ENCODE measurements at regions of chr7 and their contacts with region 1.

Region 1: GRCh38 chr7:98133181-98133580 is 26.5 kb downstream of the LMTK2 start:
- DNase-seq: peak in 6 of 9 donors; percentile 9 to 20 (median 16)
- ATAC-seq: peak; percentile 66
- H3K4me3 ChIP-seq: peak overlapping the region; percentile 11
- H3K4me3 Mint-ChIP-seq: peak overlapping the region; percentile 43 to 80 (median 60)
- H3K27ac ChIP-seq: no peak overlapping the region
- H3K27ac Mint-ChIP-seq: peak overlapping the region in 4 of 9 donors; percentile 2 to 15 (median 10)
- H3K4me1 ChIP-seq: peaks cover 30% of the 10 kb centered on the region in 2 donors
- H3K4me1 Mint-ChIP-seq: peaks cover 37 to 66% (median 57%) of the 10 kb centered on the region in 7 donors
- H3K27me3 ChIP-seq: no peaks in the 10 kb centered on the region
- H3K27me3 Mint-ChIP-seq: peaks cover 0 to 35% (median 0%) of the 10 kb centered on the region in 5 donors

Region 2: DNA sequence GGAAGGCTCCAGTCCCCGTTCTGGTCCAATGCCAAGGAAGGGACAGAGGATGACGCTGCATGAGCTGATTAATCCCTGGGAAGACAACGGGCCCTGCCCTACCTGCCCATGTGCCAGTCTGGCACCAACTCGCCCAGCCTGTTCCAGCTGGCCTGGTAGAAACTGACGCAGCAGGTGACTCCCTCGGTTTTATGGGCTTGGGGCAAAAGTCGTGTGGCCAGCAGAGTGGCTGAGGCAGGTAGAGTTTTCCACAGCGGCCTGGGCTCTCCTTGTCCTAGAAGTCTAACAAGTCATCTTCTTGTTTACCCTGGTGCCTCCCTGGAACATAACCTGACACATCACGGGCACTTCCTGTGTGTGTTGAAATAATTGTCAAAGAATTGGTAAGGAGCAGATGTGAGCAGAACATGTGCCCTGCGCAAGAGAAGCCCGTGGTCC is 46.9 kb before region 1 on chr7:
- CTCF ChIA-PET with region 1: no interaction called
- POLR2A ChIA-PET with region 1: no interaction called
- intact Hi-C with region 1: no loop called
- DNase-seq: no peak
- ATAC-seq: no peak
- H3K4me3 ChIP-seq: no peak overlapping the region
- H3K4me3 Mint-ChIP-seq: no peak overlapping the region
- H3K27ac ChIP-seq: no peak overlapping the region
- H3K27ac Mint-ChIP-seq: no peak overlapping the region
- H3K4me1 ChIP-seq: no peaks in the 10 kb centered on the region
- H3K4me1 Mint-ChIP-seq: peaks cover 0 to 2% (median 0%) of the 10 kb centered on the region in 7 donors
- H3K27me3 ChIP-seq: no peaks in the 10 kb centered on the region
- H3K27me3 Mint-ChIP-seq: peaks cover 0 to 14% (median 4%) of the 10 kb centered on the region in 5 donors

Region 3: DNA sequence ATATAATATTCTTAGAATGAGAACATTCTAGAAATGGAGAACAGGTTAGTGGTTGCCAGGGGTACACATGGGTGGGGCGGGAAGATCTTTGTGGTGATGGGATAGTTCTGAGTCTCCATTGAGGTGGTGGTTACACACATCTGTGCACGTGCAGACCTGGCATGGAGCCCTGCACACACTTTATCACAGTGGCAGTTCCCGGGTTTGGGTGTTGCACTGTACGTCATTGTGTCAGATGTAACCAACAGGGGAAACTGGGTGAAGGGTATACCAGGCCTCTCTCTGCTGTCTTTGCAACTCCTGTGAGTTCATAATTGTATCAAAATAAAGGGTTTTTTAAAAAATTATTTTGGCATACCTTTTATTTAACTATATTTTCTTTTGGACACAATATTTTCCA is 24.6 kb after region 1 on chr7:
- CTCF ChIA-PET with region 1: no interaction called
- POLR2A ChIA-PET with region 1: no interaction called
- intact Hi-C with region 1: no loop called
- DNase-seq: no peak
- ATAC-seq: no peak
- H3K4me3 ChIP-seq: no peak overlapping the region
- H3K4me3 Mint-ChIP-seq: no peak overlapping the region
- H3K27ac ChIP-seq: no peak overlapping the region
- H3K27ac Mint-ChIP-seq: no peak overlapping the region
- H3K4me1 ChIP-seq: no peaks in the 10 kb centered on the region
- H3K4me1 Mint-ChIP-seq: peaks cover 0 to 4% (median 0%) of the 10 kb centered on the region in 7 donors
- H3K27me3 ChIP-seq: no peaks in the 10 kb centered on the region
- H3K27me3 Mint-ChIP-seq: no peaks in the 10 kb centered on the region

Region 4: DNA sequence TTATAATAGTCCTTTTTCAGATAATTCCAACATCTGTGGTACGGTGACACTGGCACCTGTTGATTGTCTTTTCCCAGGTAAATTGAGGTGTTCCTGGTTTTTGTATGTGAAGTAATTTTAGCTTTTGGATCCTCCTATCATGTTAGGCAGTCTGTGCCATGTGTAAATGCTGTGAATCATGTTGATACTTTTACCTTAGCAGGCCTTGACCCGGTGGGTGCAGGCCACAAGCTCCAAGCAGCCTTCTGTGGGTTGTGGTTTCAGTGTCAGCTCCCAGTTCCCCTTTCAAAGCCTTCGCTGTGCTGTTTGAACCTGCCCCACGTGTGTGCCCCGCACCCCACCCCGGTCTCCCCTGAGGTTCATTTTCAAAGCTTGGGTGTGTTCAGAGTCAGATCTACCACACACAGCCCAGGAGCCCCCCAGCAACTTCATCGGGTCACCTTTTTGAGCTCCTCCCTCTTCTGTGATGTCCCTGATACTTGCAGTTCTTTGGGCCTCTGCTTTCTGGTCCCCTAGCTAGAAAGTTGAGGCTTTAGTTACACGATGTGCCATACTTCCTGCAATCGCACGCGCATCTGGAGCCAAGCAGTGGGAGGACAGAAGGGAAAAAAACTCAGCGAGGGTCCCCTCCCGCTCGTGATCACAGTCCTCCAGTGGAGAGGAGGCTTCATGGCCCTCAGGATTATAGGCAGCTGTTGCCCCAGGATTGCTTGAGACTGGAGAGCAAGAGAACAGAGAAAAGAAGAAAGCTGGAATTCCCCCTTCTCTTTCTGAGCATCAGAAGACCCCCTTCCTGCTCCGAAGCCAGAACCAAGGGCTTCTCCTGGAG is 69.4 kb after region 1 on chr7:
- CTCF ChIA-PET with region 1: interaction called, 3 read pairs
- POLR2A ChIA-PET with region 1: no interaction called
- intact Hi-C with region 1: loop called in 1 of 2 experiments (anchors 5 kb)
- DNase-seq: peak in 8 of 9 donors; percentile 60 to 71 (median 64)
- ATAC-seq: peak; percentile 93
- H3K4me3 ChIP-seq: peak overlapping the region; percentile 24
- H3K4me3 Mint-ChIP-seq: peak overlapping the region; percentile 81 to 91 (median 86)
- H3K27ac ChIP-seq: peak overlapping the region; percentile 60
- H3K27ac Mint-ChIP-seq: peak overlapping the region; percentile 55 to 96 (median 80)
- H3K4me1 ChIP-seq: peaks cover 21 to 49% of the 10 kb centered on the region in 2 donors
- H3K4me1 Mint-ChIP-seq: peaks cover 35 to 76% (median 65%) of the 10 kb centered on the region in 7 donors
- H3K27me3 ChIP-seq: no peaks in the 10 kb centered on the region
- H3K27me3 Mint-ChIP-seq: no peaks in the 10 kb centered on the region